ENCODE measurements at regions of chr19 and their contacts with region 1.

Region 1: DNA sequence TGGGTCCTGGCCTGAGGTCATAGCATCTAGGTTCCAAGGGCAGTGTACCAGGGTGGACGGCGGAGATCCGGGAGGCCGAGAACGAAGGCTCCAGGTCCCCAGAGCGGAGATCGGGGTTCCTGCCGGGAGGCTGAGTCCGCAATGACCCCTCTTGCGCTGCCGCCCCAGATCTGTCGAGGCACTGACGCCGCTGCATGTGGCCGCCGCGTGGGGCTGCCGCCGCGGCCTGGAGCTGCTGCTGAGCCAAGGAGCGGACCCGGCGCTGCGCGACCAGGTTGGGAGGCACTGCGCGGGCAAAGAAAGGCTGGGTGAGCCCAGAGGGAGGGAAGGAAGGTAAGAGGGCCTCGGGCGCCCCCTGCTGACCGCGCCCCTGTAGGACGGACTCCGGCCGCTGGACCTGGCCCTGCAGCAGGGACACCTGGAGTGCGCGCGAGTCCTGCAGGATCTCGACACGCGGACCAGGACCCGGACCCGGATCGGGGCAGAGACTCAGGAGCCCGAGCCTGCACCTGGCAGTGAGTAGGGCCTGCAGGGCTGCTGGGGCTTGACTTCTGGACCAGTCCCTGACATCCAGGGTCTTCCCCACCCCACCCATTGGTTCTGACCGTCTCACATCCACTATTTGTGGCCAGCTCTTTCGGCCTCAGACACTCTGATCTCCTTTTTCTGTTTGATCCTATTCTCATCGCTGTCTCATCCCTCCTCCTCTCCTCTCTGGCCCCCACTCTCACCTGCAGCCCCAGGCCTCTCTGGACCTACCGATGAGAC is 971 bp downstream of the ANKLE1 start:
- DNase-seq: peak; percentile 95
- H3K4me3 ChIP-seq: peak overlapping the region; percentile 37 to 78 (median 57)
- H3K27ac ChIP-seq: peak overlapping the region in 4 of 8 donors; percentile 41 to 80 (median 54)
- H3K4me1 ChIP-seq: peaks cover 11 to 24% (median 19%) of the 10 kb centered on the region in 6 donors
- H3K27me3 ChIP-seq: peaks cover 0 to 24% (median 14%) of the 10 kb centered on the region in 7 donors
- CTCF ChIP-seq: peak; percentile 86 to 98 (median 95)
- POLR2A ChIP-seq: no peak

Region 2: GRCh38 chr19:17069218-17069617 is 213.5 kb before region 1 on chr19:
- intact Hi-C with region 1: loop called (anchors 2 kb)
- DNase-seq: no peak
- H3K4me3 ChIP-seq: no peak overlapping the region
- H3K27ac ChIP-seq: no peak overlapping the region
- H3K4me1 ChIP-seq: peaks cover 6 to 76% (median 41%) of the 10 kb centered on the region in 6 donors
- H3K27me3 ChIP-seq: no peaks in the 10 kb centered on the region
- CTCF ChIP-seq: no peak
- POLR2A ChIP-seq: no peak

Measured in spleen (tissue), 13 donors.